Psoas muscle (tissue), 8 donors: ENCODE measurements at regions of chr12 and their contacts with region 1.

Region 1: GRCh38 chr12:92145731-92146496 is at the start of gene BTG1:
- DNase-seq: peak; percentile 97 to 99
- ATAC-seq: peak; percentile 89 to 95 (median 92)
- H3K4me3 ChIP-seq: peak within 1 kb of the TSS; percentile 86
- H3K27ac ChIP-seq: peak within 1 kb of the TSS; percentile 97
- H3K4me1 ChIP-seq: peaks cover 27% of the 10 kb centered on the region
- H3K27me3 ChIP-seq: no peaks in the 10 kb centered on the region
- CTCF ChIP-seq: no peak
- total RNA-seq, gene BTG1: 18.4 to 34.2 (median 28.5) TPM

Region 2: GRCh38 chr12:91811481-91812287 is 334.2 kb before region 1 on chr12:
- intact Hi-C with region 1: loop called in 1 of 2 experiments (anchors 10 kb)
- DNase-seq: peak; percentile 56 to 71
- ATAC-seq: peak in 2 of 4 donors; percentile 47 to 69
- H3K4me3 ChIP-seq: no peak overlapping the region
- H3K27ac ChIP-seq: no peak overlapping the region
- H3K4me1 ChIP-seq: no peaks in the 10 kb centered on the region
- H3K27me3 ChIP-seq: no peaks in the 10 kb centered on the region
- CTCF ChIP-seq: peak; percentile 79

Region 3: GRCh38 chr12:92466391-92467305 is 320.7 kb after region 1 on chr12:
- intact Hi-C with region 1: loop called in 1 of 2 experiments (anchors 2 kb)
- DNase-seq: peak; percentile 21 to 52
- ATAC-seq: peak; percentile 77 to 83 (median 82)
- H3K4me3 ChIP-seq: peak overlapping the region; percentile 54
- H3K27ac ChIP-seq: peak overlapping the region; percentile 84
- H3K4me1 ChIP-seq: peaks cover 39% of the 10 kb centered on the region
- H3K27me3 ChIP-seq: no peaks in the 10 kb centered on the region
- CTCF ChIP-seq: no peak

Region 4: DNA sequence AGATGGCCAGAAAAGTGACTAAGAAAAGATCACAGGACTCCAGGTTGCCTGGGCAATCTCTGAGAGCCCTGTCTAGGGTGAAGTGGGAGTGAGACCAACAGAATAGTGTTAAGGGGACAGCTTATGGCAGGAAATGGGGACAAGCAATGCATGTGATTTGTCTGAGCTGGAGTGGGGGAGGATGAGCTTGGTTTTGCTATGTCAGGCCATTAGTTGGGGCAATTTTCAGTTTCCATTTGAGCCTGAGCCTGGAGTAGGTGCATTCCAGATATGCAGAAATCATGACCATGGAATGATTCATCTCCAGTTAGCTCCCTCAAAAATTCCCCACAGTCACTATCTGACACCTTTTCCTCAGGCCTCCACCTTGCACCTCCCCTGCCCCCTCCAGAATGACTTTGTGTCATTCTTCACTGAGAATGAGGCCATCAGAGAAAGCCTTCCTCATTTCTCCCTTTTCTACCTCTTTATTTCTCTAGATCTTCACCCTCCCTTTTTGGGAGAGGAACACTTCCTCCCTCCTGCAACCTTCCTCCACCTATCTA is 406.0 kb after region 1 on chr12:
- intact Hi-C with region 1: loop called in 1 of 2 experiments (anchors 10 kb)
- DNase-seq: no peak
- ATAC-seq: no peak
- H3K4me3 ChIP-seq: no peak overlapping the region
- H3K27ac ChIP-seq: no peak overlapping the region
- H3K4me1 ChIP-seq: no peaks in the 10 kb centered on the region
- H3K27me3 ChIP-seq: no peaks in the 10 kb centered on the region
- CTCF ChIP-seq: no peak

Region 5: DNA sequence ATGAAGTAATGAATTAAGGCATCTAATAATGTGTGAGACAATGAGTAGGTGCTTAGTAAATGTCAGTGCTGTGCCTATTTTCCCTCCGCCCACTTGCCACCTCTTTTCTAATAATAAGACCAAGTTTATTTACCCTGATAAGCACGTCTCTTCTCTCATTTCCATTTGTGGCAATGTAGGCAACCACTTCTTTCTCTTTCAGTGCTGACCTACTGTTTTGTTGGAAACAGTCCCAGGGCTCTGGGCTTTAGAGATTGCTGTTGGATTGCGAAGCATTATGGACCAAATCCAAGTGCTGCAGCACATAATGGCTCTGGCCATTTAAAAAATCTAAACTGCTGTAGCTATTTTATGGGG is 415.6 kb after region 1 on chr12:
- intact Hi-C with region 1: loop called (anchors 5 to 10 kb)
- DNase-seq: no peak
- ATAC-seq: peak; percentile 60 to 71 (median 65)
- H3K4me3 ChIP-seq: no peak overlapping the region
- H3K27ac ChIP-seq: peak overlapping the region; percentile 23
- H3K4me1 ChIP-seq: peaks cover 4% of the 10 kb centered on the region
- H3K27me3 ChIP-seq: no peaks in the 10 kb centered on the region
- CTCF ChIP-seq: no peak

Region 6: GRCh38 chr12:92570056-92570753 is 424.3 kb after region 1 on chr12:
- intact Hi-C with region 1: loop called in 1 of 2 experiments (anchors 5 kb)
- DNase-seq: no peak
- ATAC-seq: peak; percentile 63 to 87 (median 76)
- H3K4me3 ChIP-seq: no peak overlapping the region
- H3K27ac ChIP-seq: no peak overlapping the region
- H3K4me1 ChIP-seq: no peaks in the 10 kb centered on the region
- H3K27me3 ChIP-seq: no peaks in the 10 kb centered on the region
- CTCF ChIP-seq: peak; percentile 87